ENCODE measurements at regions of chr15 and their contacts with region 1.

Region 1: GRCh38 chr15:47203993-47204392 is 513.3 kb upstream of the SEMA6D start:
- DNase-seq: no peak
- H3K4me3 ChIP-seq: no peak overlapping the region
- H3K27ac ChIP-seq: no peak overlapping the region
- H3K4me1 ChIP-seq: no peaks in the 10 kb centered on the region
- H3K27me3 ChIP-seq: no peaks in the 10 kb centered on the region
- CTCF ChIP-seq: no peak
- EP300 ChIP-seq: no peak
- POLR2A ChIP-seq: no peak

Region 2: DNA sequence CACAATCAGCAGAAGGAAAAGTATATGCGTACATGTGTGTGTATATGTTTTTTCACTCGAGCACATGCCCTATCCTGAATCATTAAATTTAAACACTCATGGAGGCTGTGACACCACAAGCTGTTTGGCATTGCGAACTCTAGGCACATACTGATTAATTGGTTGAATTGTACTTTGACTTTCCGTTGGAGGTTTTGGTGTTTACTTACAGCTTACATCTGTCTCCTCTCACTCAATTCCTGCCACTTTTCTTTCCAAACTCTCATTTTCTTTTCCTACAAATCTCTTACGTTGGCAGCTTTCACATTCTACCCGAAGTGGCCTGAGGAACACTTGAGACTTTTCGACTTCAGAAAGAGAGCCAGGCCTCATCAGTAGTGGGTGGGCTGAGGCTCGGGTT is 79.3 kb after region 1 on chr15:
- intact Hi-C with region 1: no loop called
- DNase-seq: no peak
- H3K4me3 ChIP-seq: no peak overlapping the region
- H3K27ac ChIP-seq: no peak overlapping the region
- H3K4me1 ChIP-seq: no peaks in the 10 kb centered on the region
- H3K27me3 ChIP-seq: no peaks in the 10 kb centered on the region
- CTCF ChIP-seq: no peak
- EP300 ChIP-seq: no peak
- POLR2A ChIP-seq: no peak

Region 3: DNA sequence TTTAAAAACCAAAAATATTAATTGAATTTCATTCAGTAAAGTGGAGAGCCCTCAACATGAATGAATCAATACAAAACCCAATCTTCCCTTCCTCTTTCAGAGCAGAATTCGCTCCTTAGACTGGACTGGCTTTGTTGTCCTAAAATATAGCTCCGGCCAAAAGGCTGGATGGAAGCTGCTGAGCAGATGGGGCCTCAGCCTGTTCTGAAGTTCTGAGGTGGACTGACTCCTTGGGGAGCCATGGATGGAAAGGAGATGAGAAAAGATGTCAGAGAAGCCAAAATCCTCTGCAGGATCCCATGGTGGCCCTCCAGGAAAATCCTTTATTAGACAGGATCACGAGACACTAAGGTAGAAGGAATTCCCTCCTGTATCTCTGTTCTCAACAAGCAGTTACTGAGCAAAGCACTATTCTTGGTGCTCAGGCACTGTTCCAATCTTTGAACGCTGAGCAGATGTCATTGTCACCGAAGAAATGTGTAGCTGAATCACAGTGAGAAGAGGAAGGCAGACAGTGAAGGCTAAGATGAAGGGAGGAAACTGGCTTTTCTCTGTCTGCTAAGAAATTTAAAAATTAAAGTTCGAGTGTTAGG is 635.3 kb after region 1 on chr15:
- intact Hi-C with region 1: loop called in 1 of 4 experiments (anchors 5 kb)
- DNase-seq: no peak
- H3K4me3 ChIP-seq: no peak overlapping the region
- H3K27ac ChIP-seq: no peak overlapping the region
- H3K4me1 ChIP-seq: no peaks in the 10 kb centered on the region
- H3K27me3 ChIP-seq: no peaks in the 10 kb centered on the region
- CTCF ChIP-seq: no peak
- EP300 ChIP-seq: no peak
- POLR2A ChIP-seq: no peak

Measured in ovary (tissue), 10 donors.